ENCODE measurements at regions of chr14 and their contacts with region 1.

Region 1: DNA sequence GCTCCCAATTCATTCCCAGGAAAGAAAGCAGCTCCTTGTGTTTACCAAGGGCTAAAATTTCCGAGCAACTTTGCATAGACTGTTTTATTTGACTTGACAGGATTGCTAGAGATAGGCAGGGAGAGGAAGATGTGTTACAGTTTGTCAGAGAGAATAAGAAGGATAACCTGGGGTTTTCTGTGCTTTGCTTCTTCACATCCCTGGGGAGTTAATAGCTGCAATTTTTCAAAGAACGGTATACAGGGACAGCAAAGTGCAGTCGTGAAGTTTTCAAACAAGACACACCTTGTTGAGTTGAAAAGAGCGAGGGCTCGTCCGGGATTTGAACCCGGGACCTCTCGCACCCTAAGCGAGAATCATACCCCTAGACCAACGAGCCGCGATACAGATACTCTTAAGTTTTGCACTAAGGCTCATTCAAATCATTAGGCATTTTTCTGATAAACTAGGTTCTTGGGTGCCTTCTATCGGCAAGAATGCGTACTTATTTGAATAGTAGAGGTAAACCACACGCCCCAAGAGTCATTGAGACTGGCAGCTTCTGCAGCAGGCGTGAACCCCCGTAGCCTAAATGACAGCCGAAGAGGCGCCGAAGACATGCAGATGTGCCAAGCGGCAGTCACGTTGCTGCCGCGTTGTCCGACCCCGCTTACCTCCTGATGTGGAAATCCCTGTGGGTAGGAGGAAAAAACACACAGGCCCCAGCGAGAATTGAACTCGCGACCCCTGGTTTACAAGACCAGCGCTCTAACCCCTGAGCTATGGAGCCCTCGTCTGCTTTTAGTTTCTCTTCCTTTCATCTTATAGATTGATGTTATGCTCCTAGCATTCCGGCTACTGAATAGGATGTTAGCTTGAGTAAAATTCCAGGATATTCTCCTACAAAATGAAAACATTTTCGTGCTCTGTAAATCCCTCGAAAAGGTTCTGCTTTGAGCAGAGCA is 22.2 kb upstream of the RNASE12 start:
- DNase-seq: peak; percentile 60 to 86 (median 72)
- H3K4me3 ChIP-seq: peak overlapping the region; percentile 43 to 78 (median 64)
- H3K27ac ChIP-seq: peak overlapping the region in 57 of 59 donors; percentile 7 to 88 (median 73)
- H3K27me3 ChIP-seq: no peaks in the 10 kb centered on the region
- CTCF ChIP-seq: peak; percentile 33 to 81 (median 66)

Region 2: DNA sequence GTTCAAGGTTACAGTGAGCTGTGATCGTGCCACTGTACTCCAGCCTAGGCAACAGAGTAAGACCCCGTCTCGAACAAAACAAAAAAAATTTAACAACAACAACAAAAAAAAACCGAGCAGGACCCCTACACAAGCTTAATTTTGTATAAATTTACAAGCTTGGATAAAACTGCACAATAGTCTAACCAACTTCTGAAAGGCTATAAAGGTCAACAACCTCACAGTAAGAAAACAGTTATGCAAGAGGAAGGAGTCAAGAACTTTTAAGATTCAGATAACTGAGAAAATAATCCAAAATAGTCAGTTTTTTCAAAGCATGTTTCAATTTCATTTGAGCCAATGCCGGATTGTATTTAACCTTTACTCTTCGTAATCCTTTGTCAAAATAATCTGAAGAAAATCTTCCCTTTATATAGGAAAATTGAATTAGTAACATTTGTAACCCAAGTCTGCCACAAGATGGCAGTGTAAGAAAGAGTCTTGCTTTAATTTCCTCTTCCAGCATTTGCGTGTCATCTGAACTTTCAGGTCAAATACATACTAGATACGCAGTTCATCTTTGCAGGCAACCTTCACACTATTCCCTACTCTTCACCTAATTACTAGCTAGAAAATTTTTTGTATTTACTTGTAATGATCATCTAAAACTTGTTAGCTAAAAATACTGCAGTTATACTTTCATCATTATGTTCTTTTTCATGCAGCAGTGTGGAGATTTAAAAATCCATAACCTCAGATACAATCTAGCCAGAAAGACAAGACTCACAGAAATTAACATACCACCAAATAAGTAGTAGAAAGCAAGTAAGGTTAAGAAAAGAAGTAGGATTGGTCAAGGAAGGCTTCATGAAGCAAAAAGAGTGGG is 286.1 kb before region 1 on chr14:
- intact Hi-C with region 1: loop called (anchors 2 to 5 kb)
- DNase-seq: peak in 1 of 10 donors; percentile 27
- H3K4me3 ChIP-seq: peak overlapping the region in 35 of 59 donors; percentile 1 to 41 (median 17)
- H3K27ac ChIP-seq: peak overlapping the region in 46 of 59 donors; percentile 0 to 66 (median 42)
- H3K27me3 ChIP-seq: no peaks in the 10 kb centered on the region
- CTCF ChIP-seq: peak; percentile 77 to 97 (median 87)

Region 3: GRCh38 chr14:20413045-20413799 is 200.1 kb before region 1 on chr14 and contains the start of gene TEP1:
- intact Hi-C with region 1: loop called (anchors 5 kb)
- DNase-seq: peak; percentile 63 to 86 (median 78)
- H3K4me3 ChIP-seq: peak within 1 kb of the TSS; percentile 53 to 96 (median 84)
- H3K27ac ChIP-seq: peak within 1 kb of the TSS; percentile 44 to 96 (median 88)
- H3K27me3 ChIP-seq: no peaks in the 10 kb centered on the region
- CTCF ChIP-seq: peak in 9 of 56 donors; percentile 12 to 43 (median 32)
- total RNA-seq, gene TEP1: 7.8 to 36.4 (median 17.7) TPM

Region 4: DNA sequence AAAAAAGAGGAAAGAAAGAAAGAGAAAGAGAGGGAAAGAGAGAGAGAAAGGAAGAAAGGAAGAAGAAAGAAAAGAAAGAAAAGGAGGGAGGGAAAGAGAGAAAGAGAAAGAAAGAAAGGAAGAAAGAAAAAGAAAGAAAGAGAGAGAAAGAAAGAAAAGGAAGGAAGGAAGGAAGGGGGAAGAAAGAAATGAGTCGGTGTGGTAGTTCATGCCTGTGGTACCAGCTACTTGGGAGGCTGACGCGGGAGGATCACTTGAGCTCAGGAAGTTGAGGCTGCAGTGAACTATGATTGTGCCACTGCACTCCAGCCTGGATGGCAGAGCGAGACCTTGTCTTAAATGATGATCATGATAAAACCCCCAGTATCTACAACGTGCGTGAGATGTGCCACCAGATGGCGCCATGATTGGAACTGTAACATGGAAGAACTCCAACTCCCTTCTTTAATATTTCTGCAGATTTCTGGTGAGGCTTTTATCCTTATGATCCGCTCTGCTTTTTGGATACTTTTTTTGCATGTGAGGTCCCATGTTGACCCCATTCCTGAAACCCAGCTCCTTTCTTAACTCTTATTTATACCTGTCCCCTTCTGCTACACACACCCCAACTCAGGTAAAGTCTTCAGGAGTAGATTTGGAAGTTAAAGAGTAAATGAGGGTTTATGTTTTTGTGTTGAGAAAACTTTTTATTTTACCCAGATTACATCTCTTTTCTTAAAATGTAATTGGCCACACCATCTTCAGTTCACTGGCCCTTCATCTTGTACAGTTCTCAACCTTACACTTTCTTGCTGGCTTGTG is 82.4 kb before region 1 on chr14:
- intact Hi-C with region 1: loop called in 1 of 2 experiments (anchors 5 kb)
- DNase-seq: peak in 9 of 10 donors; percentile 38 to 71 (median 44)
- H3K4me3 ChIP-seq: no peak overlapping the region
- H3K27ac ChIP-seq: no peak overlapping the region
- H3K27me3 ChIP-seq: peaks cover 0 to 20% (median 0%) of the 10 kb centered on the region in 45 donors
- CTCF ChIP-seq: peak; percentile 32 to 78 (median 62)

Region 5: GRCh38 chr14:20550926-20551325 is 62.4 kb before region 1 on chr14:
- intact Hi-C with region 1: no loop called
- DNase-seq: no peak
- H3K4me3 ChIP-seq: no peak overlapping the region
- H3K27ac ChIP-seq: no peak overlapping the region
- H3K27me3 ChIP-seq: peaks cover 0 to 33% (median under 1%) of the 10 kb centered on the region in 45 donors
- CTCF ChIP-seq: no peak

Region 6: DNA sequence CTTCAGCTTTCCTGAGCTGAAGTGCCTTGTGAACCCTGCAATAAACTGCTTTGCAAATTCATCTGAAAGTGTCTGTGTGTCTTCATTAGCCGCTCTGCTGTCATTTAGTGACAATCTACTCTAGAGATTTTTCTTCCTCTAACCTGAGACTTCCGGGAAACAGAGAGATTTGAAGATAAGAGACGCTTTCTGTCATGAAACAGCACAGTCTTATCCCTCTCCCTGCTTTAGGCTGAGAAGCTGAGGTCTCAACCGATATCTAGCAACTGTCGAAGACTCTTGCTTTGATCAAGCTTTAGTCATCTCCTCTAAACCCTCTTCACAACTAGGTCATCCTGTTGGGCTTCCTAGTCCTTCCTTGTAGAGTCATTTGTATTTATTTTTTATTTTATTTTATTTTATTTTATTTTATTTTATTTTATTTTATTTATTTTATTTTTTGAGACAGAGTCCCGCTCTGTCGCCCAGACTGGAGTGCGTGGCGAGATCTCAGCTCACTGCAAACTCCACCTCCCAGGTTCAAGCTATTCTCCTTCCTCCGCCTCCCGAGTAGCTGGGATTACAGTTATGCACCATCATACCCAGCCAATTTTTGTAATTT is 343.1 kb after region 1 on chr14:
- intact Hi-C with region 1: loop called in 1 of 2 experiments (anchors 5 kb)
- DNase-seq: no peak
- H3K4me3 ChIP-seq: no peak overlapping the region
- H3K27ac ChIP-seq: no peak overlapping the region
- H3K27me3 ChIP-seq: peaks cover 0 to 31% (median 0%) of the 10 kb centered on the region in 45 donors
- CTCF ChIP-seq: no peak